Left lung (tissue), 14 donors: ENCODE measurements at regions of chr10 and their contacts with region 1.

Region 1: DNA sequence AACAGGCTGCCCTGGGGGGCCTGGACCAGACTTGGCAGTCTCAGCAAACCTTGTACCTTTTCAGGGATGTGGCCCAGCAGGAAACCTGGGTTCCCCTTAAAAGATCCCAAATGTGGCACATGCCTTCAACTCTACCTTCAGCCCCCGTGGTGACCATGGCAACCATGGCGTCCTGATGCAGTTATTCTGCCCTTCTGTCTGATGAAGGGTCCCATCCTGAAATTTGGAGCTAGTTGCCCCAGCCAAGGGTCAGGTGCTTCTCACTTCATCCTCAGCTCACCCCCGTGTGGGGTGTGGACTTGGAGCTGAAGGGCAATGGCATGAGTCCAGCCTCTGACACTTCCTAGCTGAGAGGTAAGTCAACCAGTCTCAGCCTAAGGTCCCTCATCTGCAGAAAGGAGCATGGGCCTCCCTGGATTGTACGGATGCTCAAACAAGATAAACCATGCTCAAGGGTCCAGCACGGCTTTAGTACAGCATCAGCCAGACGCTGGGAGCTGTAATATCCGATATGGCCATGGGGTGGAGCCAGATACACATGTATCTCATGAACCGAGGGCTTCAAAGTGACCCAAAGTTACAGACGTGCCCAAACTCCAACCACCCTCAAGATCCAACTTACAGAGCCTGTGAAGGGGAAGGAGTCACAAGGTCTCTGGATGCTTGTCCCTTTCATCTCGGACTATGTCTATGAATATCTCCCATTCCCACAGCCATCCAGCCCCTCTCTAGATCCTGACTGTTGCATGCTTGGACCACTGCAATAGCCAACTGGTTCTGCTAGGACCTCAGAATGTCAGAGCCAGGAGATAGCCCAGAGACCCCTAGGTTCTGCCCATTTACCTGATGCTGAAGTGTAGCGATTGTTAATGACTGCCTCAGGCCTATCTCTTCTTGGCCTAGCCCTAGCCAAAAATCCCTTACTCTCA is 142.5 kb downstream of the SH3PXD2A start:
- DNase-seq: peak; percentile 29 to 85 (median 70)
- ATAC-seq: peak; percentile 94
- H3K4me3 ChIP-seq: no peak overlapping the region
- H3K27ac ChIP-seq: no peak overlapping the region
- H3K4me1 ChIP-seq: no peaks in the 10 kb centered on the region
- H3K27me3 ChIP-seq: no peaks in the 10 kb centered on the region
- CTCF ChIP-seq: peak; percentile 85 to 89

Region 2: GRCh38 chr10:103859161-103860086 is 146.6 kb after region 1 on chr10:
- intact Hi-C with region 1: loop called (anchors 2 to 10 kb)
- DNase-seq: peak in 2 of 4 donors; percentile 65 to 73
- ATAC-seq: peak; percentile 82
- H3K4me3 ChIP-seq: no peak overlapping the region
- H3K27ac ChIP-seq: peak overlapping the region in 1 of 2 donors; percentile 23
- H3K4me1 ChIP-seq: peaks cover under 1 to 19% of the 10 kb centered on the region in 2 donors
- H3K27me3 ChIP-seq: peaks cover 0 to 20% of the 10 kb centered on the region in 2 donors
- CTCF ChIP-seq: peak; percentile 62 to 69

Region 3: GRCh38 chr10:104925232-104925851 is 1212.5 kb after region 1 on chr10:
- intact Hi-C with region 1: no loop called
- DNase-seq: peak in 2 of 4 donors; percentile 8 to 35
- ATAC-seq: peak; percentile 64
- H3K4me3 ChIP-seq: no peak overlapping the region
- H3K27ac ChIP-seq: no peak overlapping the region
- H3K4me1 ChIP-seq: no peaks in the 10 kb centered on the region
- H3K27me3 ChIP-seq: no peaks in the 10 kb centered on the region
- CTCF ChIP-seq: peak; percentile 59 to 64